ENCODE measurements at regions of chr2 and their contacts with region 1.

Region 1: DNA sequence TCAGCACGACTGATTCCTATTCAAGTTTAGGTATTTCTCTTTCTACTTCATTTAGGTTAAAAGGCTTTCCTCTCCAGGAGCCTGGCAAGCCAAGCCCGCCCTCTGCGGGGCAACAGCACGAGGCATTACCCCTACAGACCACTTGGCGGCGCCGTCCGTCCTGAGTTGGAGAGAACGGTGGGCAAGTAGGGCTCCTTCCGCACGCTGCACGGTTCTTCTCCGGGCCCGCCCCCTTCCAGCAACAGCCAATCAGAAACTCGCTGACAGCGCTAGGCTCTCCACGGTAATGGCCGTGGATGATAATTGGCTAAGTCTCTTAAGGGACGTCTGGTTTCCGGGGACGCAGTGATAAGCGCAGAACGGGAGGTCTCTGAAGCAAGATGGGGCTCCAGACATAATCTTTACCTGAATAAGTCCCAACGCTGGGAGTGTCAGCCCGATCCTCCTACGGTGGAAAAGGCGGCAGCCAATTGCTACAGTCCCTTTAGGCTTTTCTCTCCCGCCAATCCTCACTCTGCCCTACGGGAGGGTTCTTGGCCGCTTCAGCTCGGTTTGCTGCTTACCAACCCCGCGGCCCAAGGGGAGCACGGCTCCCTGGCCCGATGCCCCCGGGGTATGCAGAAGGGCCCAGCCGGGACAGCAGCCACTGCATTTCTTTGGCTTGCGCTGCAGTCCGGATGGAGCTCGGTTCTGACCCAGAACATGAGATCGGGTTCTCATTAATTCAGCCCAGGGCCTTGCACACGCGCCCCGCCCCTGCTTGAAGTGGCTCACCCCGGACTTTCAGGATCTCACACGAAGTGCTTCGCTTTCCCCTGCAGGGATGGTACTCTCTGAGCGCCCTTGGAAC is 206.9 kb upstream of the PKDCC start:
- DNase-seq: peak; percentile 98
- ATAC-seq: peak; percentile 99
- H3K4me3 Mint-ChIP-seq: peak overlapping the region; percentile 89
- H3K27ac Mint-ChIP-seq: peak overlapping the region; percentile 92
- H3K4me1 Mint-ChIP-seq: peaks cover 6% of the 10 kb centered on the region
- H3K27me3 Mint-ChIP-seq: peaks cover 7% of the 10 kb centered on the region
- CTCF ChIP-seq: peak; percentile 87

Region 2: DNA sequence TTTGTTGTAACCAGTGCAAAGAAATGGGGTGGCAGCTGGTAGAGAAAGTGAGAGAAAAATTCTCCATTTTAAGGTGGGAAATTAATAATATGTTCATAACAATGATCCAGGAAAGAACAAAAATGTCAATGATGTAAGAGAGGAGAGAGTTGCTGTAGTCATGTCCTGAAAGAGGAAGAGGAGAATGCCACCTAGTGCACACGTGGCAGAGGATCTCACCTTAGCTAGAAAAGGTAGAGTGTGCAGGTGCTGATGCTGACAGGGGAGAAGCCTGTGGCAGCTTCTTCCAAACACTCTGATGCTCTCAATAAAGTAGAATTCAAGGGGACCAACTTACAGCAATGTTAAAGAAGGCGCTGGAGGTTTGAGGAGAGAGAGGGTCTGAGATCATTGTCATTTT is 76.0 kb before region 1 on chr2:
- CTCF ChIA-PET with region 1: no interaction called
- POLR2A ChIA-PET with region 1: no interaction called
- intact Hi-C with region 1: no loop called
- DNase-seq: no peak
- ATAC-seq: no peak
- H3K4me3 Mint-ChIP-seq: no peak overlapping the region
- H3K27ac Mint-ChIP-seq: no peak overlapping the region
- H3K4me1 Mint-ChIP-seq: no peaks in the 10 kb centered on the region
- H3K27me3 Mint-ChIP-seq: peaks cover 12% of the 10 kb centered on the region
- CTCF ChIP-seq: no peak

Region 3: DNA sequence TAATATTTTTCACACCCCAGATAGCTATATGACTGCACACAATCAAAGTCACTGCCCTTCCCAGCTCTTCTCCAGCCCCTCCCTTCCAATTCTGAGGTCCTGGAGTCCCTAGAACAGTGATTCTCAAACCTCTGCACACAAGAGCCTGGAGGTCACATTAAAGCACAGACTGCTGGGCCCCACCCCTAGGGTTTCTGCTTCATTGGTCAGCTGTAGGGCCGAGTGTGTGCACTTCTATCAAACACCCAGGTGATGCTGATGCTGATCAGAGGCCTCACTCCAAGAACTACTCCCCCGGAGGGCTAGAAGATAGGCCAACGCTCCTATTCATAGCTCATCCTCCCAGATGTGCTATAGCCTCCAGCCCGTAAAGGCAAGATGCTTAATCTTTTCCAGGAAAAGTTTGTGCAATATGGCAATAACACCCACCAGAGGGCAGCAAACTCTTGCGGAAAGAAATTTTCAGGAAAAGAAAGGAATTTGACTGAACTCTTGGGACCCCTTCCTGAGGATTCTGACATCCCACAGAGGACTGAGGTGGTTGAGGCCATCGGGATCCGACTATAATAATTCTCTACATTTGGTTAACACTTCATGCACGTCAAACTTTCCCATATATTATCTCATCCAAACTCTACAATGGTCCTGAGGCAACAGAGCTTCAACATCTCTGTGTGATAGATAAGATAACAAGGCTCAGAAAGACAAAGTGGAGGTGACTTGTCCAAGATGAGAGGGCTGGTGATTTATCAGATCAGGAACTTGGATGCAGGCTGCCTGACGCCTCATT is 12.7 kb after region 1 on chr2:
- CTCF ChIA-PET with region 1: interaction called, 54 read pairs
- POLR2A ChIA-PET with region 1: interaction called, 9 read pairs
- intact Hi-C with region 1: no loop called
- DNase-seq: peak; percentile 9
- ATAC-seq: peak; percentile 20
- H3K4me3 Mint-ChIP-seq: no peak overlapping the region
- H3K27ac Mint-ChIP-seq: no peak overlapping the region
- H3K4me1 Mint-ChIP-seq: peaks cover 4% of the 10 kb centered on the region
- H3K27me3 Mint-ChIP-seq: peaks cover 4% of the 10 kb centered on the region
- CTCF ChIP-seq: peak; percentile 75

Region 4: DNA sequence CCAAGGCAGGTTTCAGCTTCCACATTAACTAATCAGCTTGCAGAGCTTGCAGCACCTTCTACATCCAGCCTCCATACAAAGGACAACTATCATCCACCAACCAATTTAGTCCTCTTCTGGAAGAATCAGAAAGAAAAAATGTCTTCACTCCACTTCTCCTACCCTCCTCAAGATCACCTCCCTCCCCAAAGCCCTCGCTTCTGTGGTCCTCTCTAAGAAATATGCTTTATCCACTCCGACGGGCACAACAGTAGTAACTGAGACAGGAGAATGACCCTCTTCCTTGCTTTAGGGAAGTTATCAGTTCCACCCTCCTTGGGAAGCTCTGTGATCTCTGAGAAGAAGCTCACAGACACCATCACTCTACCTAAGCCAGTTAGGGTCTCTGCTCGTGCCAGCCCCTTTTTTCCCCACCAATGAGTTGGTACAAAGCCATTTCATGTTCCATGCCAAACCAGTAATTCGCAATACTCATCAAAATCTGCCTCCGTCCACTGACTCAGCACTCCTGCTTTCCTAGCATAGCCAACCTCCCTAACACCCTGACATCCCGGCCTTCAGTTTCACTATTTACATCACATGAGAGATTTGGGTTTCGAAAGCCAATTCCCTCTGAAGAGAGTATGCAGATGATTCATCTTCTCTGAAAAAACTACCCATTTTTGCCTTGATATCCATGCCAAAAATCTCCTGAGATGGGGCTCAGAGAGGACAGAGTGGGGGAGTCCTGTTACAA is 92.8 kb after region 1 on chr2:
- CTCF ChIA-PET with region 1: no interaction called
- POLR2A ChIA-PET with region 1: no interaction called
- intact Hi-C with region 1: no loop called
- DNase-seq: no peak
- ATAC-seq: no peak
- H3K4me3 Mint-ChIP-seq: no peak overlapping the region
- H3K27ac Mint-ChIP-seq: no peak overlapping the region
- H3K4me1 Mint-ChIP-seq: no peaks in the 10 kb centered on the region
- H3K27me3 Mint-ChIP-seq: peaks cover 5% of the 10 kb centered on the region
- CTCF ChIP-seq: no peak